Activated CD4-positive, alpha-beta T cell treated with anti-CD3 and anti-CD28 coated beads for 36 hours (primary cell): ENCODE measurements at regions of chr5 and their contacts with region 1.

Region 1: GRCh38 chr5:93899026-93899600 is 157.7 kb upstream of the POU5F2 start:
- DNase-seq: no peak
- ATAC-seq: no peak
- H3K4me3 Mint-ChIP-seq: no peak overlapping the region
- H3K27ac Mint-ChIP-seq: no peak overlapping the region
- H3K4me1 Mint-ChIP-seq: peaks cover 2% of the 10 kb centered on the region
- H3K27me3 Mint-ChIP-seq: no peaks in the 10 kb centered on the region

Region 2: DNA sequence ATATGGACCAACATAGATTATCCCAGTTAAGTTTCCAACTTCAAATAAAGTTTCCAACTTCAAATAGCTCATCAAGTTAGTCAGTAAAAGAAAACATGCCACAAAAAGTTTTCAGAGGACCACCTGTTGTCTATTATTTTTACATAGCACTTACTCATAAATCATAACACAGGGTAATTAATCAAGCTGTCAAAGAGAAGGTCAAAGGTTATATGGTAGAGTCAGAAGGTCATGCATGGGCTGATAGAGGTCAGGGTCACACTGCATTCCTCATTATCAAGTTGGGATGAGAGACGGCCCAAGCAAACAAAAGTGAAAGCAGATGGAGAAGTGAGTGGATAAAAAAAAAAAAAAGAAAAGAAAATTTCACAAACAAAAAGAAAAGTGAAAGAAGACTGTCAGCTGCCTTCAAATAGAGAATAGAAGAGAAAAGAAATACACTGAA is 12.2 kb before region 1 on chr5:
- CTCF ChIA-PET with region 1: interaction called, 19 read pairs
- POLR2A ChIA-PET with region 1: no interaction called
- intact Hi-C with region 1: no loop called
- DNase-seq: no peak
- ATAC-seq: no peak
- H3K4me3 Mint-ChIP-seq: no peak overlapping the region
- H3K27ac Mint-ChIP-seq: no peak overlapping the region
- H3K4me1 Mint-ChIP-seq: peaks cover 11% of the 10 kb centered on the region
- H3K27me3 Mint-ChIP-seq: no peaks in the 10 kb centered on the region